ENCODE measurements at regions of chr2 and their contacts with region 1.

Region 1: GRCh38 chr2:216698895-216699294 is 3.5 kb upstream of the IGFBP5 start:
- DNase-seq: peak; percentile 48
- ATAC-seq: peak; percentile 80
- H3K4me3 ChIP-seq: no peak overlapping the region
- H3K27ac ChIP-seq: no peak overlapping the region
- H3K4me1 ChIP-seq: peaks cover 20 to 30% of the 10 kb centered on the region in 2 experiments
- H3K27me3 ChIP-seq: peaks cover 22% of the 10 kb centered on the region; the same call in 1 of the 2 replicates
- CTCF ChIP-seq: peak; percentile 57 to 74 (median 67); a peak in 5 of 6 replicates
- POLR2A ChIP-seq: no peak
- RAD21 ChIP-seq: peak; percentile 88

Region 2: DNA sequence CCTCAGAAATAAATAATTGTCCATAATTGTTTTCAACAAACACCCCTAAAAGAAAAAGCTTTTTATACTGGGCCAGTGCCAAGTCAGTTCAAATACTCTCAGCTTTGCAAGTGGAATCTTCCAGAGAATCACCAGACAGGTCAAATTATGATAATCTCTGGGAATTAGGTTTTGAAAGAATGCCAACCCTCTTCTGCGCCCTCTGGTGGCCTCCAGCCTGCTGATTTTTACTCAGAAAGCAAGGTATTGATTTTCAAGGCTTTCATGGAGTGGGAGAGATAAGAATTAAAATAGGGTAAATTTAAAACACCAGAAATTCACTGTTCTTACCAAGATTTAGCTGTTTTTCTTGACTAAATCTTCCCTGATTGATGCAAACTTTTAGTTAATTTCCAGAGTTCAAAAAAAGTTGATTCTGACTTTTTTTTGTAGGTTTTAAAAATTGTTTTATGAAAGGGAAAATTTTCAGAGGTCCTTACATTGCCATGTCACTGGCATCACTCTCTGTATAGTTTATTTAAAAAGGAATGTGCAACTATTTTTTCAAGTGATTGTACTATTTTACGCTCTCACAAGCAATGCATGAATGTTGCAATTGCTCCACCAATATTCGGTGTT is 443.9 kb after region 1 on chr2:
- CTCF ChIA-PET with region 1: interaction called, 9 read pairs
- POLR2A ChIA-PET with region 1: no interaction called
- RAD21 ChIA-PET with region 1: no interaction called
- intact Hi-C with region 1: loop called (anchors 1 kb)
- DNase-seq: peak; percentile 29
- ATAC-seq: peak; percentile 64
- H3K4me3 ChIP-seq: no peak overlapping the region
- H3K27ac ChIP-seq: no peak overlapping the region
- H3K4me1 ChIP-seq: no peaks in the 10 kb centered on the region
- H3K27me3 ChIP-seq: peaks cover 22% of the 10 kb centered on the region
- CTCF ChIP-seq: peak; percentile 75 to 88 (median 83); a peak in 5 of 6 replicates
- POLR2A ChIP-seq: no peak
- RAD21 ChIP-seq: peak; percentile 74

Region 3: DNA sequence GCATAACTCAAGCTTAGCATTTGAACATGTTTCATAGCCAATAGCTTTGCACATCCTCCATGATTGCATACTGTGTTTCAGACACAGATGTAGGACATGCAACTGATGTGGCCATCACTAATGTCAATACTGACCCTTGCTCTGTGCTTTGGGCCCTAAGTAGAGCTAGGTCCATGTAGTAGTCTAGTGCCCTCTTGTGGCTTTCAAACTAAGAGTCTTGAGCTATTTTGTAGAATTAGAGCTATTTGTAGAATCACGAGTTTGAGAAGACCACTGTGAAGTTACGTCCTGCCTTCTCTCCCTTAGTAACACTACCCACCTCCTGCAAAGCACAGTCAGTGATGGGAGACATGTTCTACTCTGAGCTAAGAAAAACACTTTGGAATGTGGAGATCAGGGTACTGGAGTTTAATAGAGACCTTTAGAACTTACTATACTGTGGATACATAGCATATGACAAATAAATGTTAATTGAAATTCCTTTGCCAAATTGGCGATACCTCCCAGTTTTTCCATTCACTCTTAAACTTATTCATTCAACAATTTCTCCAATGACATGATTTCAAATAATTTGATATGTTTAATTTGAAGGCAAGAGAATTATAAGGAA is 467.5 kb after region 1 on chr2:
- CTCF ChIA-PET with region 1: interaction called, 20 read pairs
- POLR2A ChIA-PET with region 1: no interaction called
- RAD21 ChIA-PET with region 1: interaction called in 1 of 2 experiments, 3 read pairs
- intact Hi-C with region 1: loop called (anchors 2 kb)
- DNase-seq: peak; percentile 32
- ATAC-seq: peak; percentile 76
- H3K4me3 ChIP-seq: no peak overlapping the region
- H3K27ac ChIP-seq: no peak overlapping the region
- H3K4me1 ChIP-seq: peaks cover 0 to 6% of the 10 kb centered on the region in 2 experiments; a peak in 2 of 4 replicates
- H3K27me3 ChIP-seq: peaks cover 27% of the 10 kb centered on the region
- CTCF ChIP-seq: peak; percentile 49 to 65 (median 61); a peak in 5 of 6 replicates
- POLR2A ChIP-seq: no peak
- RAD21 ChIP-seq: peak; percentile 74

Region 4: DNA sequence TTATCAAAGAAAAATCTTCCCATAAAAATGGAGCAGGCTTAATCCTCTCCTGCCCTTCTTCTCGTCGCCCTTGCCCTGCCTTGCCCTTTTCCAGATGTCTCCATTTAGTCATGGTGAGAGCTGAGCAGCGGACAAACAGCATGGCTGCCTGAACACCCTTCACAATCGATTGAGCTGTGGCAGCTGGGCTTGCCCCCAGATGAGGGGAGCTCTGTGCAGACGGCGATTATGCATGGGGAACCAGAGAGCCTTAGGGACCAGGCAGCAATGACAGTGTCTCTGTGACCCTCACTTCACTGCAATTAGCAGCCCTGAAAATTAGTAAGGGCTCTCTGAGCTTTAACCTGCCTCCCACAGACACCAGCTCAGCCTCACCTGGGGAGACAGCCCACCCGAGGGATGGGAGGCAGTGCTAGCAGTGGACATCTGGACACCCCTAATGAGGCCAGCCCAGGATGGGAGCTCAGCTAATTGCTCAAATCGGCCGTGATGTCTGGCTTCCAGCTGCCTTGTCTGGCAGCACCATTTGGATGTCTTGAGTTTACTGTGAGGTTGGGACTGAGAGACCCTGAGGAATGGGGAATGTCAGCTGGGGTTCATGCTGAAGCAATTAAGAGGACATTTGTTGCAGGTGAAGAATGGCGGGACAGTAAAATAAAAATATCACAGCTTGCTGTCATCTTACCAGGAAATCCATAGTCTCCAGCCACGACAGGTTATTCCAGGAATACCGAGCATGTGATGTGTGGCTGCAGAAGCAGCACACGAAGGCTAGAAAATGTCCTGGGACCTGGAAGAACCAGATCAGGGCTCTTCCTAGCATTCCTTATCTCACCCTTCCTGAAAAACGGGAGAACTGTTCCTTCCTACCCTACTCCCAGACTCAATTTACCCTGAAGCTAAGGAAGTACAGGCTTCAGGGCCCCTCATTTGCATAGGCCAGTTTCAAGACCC is 938.4 kb after region 1 on chr2:
- CTCF ChIA-PET with region 1: no interaction called
- POLR2A ChIA-PET with region 1: no interaction called
- RAD21 ChIA-PET with region 1: no interaction called
- intact Hi-C with region 1: loop called (anchors 5 kb)
- DNase-seq: no peak
- ATAC-seq: no peak
- H3K4me3 ChIP-seq: no peak overlapping the region
- H3K27ac ChIP-seq: no peak overlapping the region
- H3K4me1 ChIP-seq: no peaks in the 10 kb centered on the region
- H3K27me3 ChIP-seq: peaks cover 49% of the 10 kb centered on the region
- CTCF ChIP-seq: no peak
- POLR2A ChIP-seq: no peak
- RAD21 ChIP-seq: no peak

Region 5: DNA sequence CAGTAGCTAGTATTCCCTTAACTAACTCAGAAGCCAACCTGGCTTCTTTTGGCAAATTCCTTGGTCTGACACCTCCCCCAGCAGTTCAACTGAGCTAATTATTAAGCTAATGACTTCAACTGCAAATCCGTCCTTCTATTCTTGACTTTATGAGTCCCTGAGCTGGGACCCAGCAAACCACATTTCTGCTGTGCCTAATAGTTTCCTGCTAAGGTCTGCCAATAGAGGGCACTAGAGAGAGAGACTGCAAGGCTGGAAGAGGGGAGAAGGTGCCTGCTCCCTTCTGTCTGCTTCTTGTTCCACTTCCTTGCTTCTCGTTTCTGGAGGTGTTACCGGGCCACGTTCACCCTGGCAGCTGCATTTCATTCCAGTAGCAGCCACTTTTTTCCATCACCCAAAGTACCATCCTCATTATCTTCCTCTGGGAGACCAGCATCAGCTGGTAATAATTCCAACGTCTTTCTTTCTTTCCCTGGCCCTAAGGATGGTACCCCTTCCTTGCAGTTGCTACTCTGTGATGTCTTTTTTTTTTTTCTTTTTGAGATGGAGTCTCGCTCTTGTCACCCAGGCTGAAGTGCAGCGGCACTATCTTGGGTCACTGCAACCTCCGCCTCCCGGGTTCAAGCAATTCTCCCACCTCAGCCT is 951.9 kb after region 1 on chr2:
- CTCF ChIA-PET with region 1: interaction called, 9 read pairs
- POLR2A ChIA-PET with region 1: no interaction called
- RAD21 ChIA-PET with region 1: no interaction called
- intact Hi-C with region 1: loop called (anchors 5 kb)
- DNase-seq: peak; percentile 60
- ATAC-seq: peak; percentile 87
- H3K4me3 ChIP-seq: no peak overlapping the region
- H3K27ac ChIP-seq: no peak overlapping the region
- H3K4me1 ChIP-seq: peaks cover 7 to 21% of the 10 kb centered on the region in 2 experiments; a peak in 3 of 4 replicates
- H3K27me3 ChIP-seq: no peaks in the 10 kb centered on the region
- CTCF ChIP-seq: peak; percentile 57 to 93 (median 82); a peak in 5 of 6 replicates
- POLR2A ChIP-seq: no peak
- RAD21 ChIP-seq: peak; percentile 60